Activated naive CD4-positive, alpha-beta T cell treated with anti-CD3 and anti-CD28 coated beads for 36 hours (primary cell): ENCODE measurements at regions of chr1 and their contacts with region 1.

Region 1: DNA sequence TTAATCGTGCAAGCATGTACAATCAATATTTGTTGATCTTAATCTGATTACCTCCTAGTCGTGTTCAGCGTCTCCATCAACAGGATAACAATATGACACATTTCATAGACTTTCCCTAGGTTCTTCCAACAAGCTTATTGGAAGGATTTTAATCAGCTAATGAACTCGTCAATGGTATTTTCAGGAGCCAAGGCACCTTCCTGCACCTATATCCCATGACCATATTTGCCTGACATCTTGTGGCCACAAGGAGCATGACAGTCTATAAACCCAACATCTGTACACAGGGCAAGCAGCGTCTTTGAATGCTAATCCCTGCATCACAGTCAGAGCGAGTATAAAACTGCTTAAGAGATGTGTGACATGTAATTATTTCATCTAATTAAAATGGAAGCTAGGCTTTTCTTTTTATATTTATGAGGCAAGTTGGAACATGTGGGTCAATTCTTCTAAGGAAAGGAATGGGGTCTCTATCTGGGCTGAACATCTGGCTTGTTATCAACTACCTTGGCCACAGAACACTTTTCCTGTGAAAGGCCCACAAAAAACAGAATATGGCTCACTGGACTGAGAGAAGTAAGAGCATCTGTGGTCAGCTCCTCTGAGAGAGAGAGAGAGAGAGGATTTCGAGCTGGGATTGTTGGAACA is 388.8 kb downstream of the NTNG1 start:
- DNase-seq: peak; percentile 36
- H3K4me3 Mint-ChIP-seq: no peak overlapping the region
- H3K27ac Mint-ChIP-seq: no peak overlapping the region
- H3K4me1 Mint-ChIP-seq: no peaks in the 10 kb centered on the region
- H3K27me3 Mint-ChIP-seq: peaks cover 19% of the 10 kb centered on the region

Region 2: DNA sequence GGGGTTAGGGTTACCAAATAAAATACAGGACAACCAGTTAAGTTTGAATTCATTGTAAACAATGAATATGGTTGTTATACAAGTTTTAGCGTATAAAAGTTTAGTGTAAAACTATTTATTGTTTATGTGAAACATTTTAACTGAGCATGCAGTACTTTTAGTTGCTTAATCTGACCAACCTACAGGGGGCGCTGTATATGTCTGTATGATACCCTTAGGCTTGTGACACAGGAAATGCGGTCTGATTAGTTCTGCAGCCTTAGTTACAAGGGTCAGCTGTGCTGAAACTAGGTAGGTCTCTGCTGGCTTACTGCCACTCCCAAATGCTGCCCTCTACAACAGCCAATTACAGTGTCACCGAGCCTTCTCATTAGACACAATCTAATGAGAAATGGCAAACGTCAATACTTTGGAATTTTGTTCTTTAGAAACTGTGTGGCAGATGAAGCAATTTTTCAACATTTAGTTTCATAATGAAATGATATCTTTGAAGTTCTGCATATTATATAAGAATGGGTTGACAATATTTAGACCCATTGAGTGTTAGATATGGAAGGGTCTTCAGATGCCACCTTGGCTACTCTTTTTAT is 332.6 kb before region 1 on chr1:
- CTCF ChIA-PET with region 1: no interaction called
- intact Hi-C with region 1: loop called (anchors 5 kb)
- DNase-seq: peak; percentile 19
- H3K4me3 Mint-ChIP-seq: no peak overlapping the region
- H3K27ac Mint-ChIP-seq: no peak overlapping the region
- H3K4me1 Mint-ChIP-seq: no peaks in the 10 kb centered on the region
- H3K27me3 Mint-ChIP-seq: peaks cover 2% of the 10 kb centered on the region

Region 3: DNA sequence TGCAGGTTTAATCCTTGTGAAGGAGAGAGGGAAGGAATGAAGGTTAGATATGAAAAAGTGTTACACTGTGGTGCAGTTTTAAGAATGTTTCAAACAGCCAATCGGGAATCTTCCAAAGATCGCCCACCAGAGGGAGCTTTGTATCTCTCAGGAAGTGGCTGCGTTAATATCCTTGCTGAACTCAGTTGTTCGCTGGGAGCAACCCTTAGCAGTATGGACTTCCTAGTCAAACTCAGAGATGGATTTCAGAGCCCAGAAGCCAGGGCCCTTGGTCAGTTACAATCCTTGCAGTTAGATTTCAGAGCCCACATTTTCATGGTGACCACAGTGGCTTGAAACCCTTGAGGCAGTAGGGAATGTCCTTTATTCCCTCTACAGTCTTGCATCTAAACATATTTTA is 252.6 kb before region 1 on chr1:
- CTCF ChIA-PET with region 1: interaction called, 3 read pairs
- intact Hi-C with region 1: loop called (anchors 2 kb)
- DNase-seq: peak; percentile 16
- H3K4me3 Mint-ChIP-seq: no peak overlapping the region
- H3K27ac Mint-ChIP-seq: no peak overlapping the region
- H3K4me1 Mint-ChIP-seq: no peaks in the 10 kb centered on the region
- H3K27me3 Mint-ChIP-seq: peaks cover 2% of the 10 kb centered on the region

Region 4: DNA sequence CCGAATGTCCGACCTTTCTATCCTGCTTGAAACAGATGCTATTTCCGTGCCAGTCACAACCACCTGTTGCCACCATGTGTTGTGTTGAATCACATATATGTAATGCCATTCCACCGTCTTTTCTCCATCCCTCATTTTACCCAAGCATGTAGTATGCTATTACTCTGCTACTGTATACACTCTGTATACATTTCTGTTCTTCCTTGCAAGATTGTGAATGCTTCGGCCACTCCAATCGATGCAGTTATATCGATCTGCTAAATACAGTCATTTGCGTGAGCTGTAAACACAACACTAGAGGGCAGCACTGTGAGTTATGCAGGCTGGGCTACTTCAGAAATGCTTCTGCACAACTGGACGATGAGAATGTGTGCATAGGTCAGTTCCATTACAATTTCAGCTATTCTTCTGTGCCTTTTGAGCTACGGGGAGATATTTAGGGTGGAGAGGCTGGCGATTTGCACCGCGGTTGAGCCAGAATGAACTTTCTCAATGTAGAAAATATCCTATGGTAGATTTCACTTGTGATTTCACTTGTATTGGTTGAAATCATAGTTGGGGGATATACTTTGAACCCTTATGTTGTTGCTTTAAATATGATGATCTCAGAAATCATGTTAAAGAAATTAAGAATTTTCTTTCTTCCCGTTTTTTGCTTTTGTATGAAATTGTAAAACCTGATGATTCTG is 98.9 kb before region 1 on chr1:
- CTCF ChIA-PET with region 1: interaction called, 17 read pairs
- intact Hi-C with region 1: loop called (anchors 1 kb)
- DNase-seq: peak; percentile 28
- H3K4me3 Mint-ChIP-seq: no peak overlapping the region
- H3K27ac Mint-ChIP-seq: no peak overlapping the region
- H3K4me1 Mint-ChIP-seq: no peaks in the 10 kb centered on the region
- H3K27me3 Mint-ChIP-seq: peaks cover 7% of the 10 kb centered on the region